ENCODE measurements at regions of chr15 and their contacts with region 1.

Region 1: GRCh38 chr15:43510200-43511011 is 7.0 kb upstream of the MAP1A start:
- DNase-seq: peak; percentile 96 to 98 (median 97)
- H3K4me3 ChIP-seq: peak overlapping the region; percentile 86 to 87
- H3K4me3 Mint-ChIP-seq: peak overlapping the region; percentile 92 to 98 (median 95)
- H3K27ac ChIP-seq: peak overlapping the region; percentile 71
- H3K27ac Mint-ChIP-seq: peak overlapping the region; percentile 96 to 99 (median 97)
- H3K4me1 ChIP-seq: peaks cover 40% of the 10 kb centered on the region
- H3K4me1 Mint-ChIP-seq: peaks cover 23 to 48% (median 38%) of the 10 kb centered on the region in 4 donors
- H3K27me3 ChIP-seq: no peaks in the 10 kb centered on the region
- H3K27me3 Mint-ChIP-seq: no peaks in the 10 kb centered on the region

Region 2: GRCh38 chr15:42891569-42891968 is 618.8 kb before region 1 on chr15:
- CTCF ChIA-PET with region 1: no interaction called
- POLR2A ChIA-PET with region 1: no interaction called
- intact Hi-C with region 1: no loop called
- DNase-seq: no peak
- H3K4me3 ChIP-seq: no peak overlapping the region
- H3K4me3 Mint-ChIP-seq: no peak overlapping the region
- H3K27ac ChIP-seq: no peak overlapping the region
- H3K27ac Mint-ChIP-seq: peak overlapping the region in 1 of 7 donors; percentile 29
- H3K4me1 ChIP-seq: no peaks in the 10 kb centered on the region
- H3K4me1 Mint-ChIP-seq: peaks cover 0 to 8% (median 3%) of the 10 kb centered on the region in 4 donors
- H3K27me3 ChIP-seq: no peaks in the 10 kb centered on the region
- H3K27me3 Mint-ChIP-seq: no peaks in the 10 kb centered on the region

Region 3: GRCh38 chr15:43370975-43371974 is 139.1 kb before region 1 on chr15 and contains the starts of genes TUBGCP4 and ZSCAN29:
- CTCF ChIA-PET with region 1: interaction called, 29 read pairs
- POLR2A ChIA-PET with region 1: interaction called, 14 read pairs
- intact Hi-C with region 1: loop called (anchors 5 kb)
- DNase-seq: peak; percentile 67 to 76 (median 68)
- H3K4me3 ChIP-seq: peak within 1 kb of the TSS; percentile 49 to 53
- H3K4me3 Mint-ChIP-seq: peak within 1 kb of the TSS; percentile 88 to 94 (median 92)
- H3K27ac ChIP-seq: peak within 1 kb of the TSS; percentile 70
- H3K27ac Mint-ChIP-seq: peak within 1 kb of the TSS; percentile 79 to 94 (median 90)
- H3K4me1 ChIP-seq: peaks cover 33% of the 10 kb centered on the region
- H3K4me1 Mint-ChIP-seq: peaks cover 45 to 65% (median 50%) of the 10 kb centered on the region in 4 donors
- H3K27me3 ChIP-seq: no peaks in the 10 kb centered on the region
- H3K27me3 Mint-ChIP-seq: no peaks in the 10 kb centered on the region
- total RNA-seq, gene TUBGCP4: 23.6 to 23.9 TPM
- total RNA-seq, gene ZSCAN29: 34.8 to 36.4 TPM

Region 4: GRCh38 chr15:43469867-43470266 is 40.5 kb before region 1 on chr15:
- CTCF ChIA-PET with region 1: interaction called, 24 read pairs
- POLR2A ChIA-PET with region 1: no interaction called
- intact Hi-C with region 1: no loop called
- DNase-seq: no peak
- H3K4me3 ChIP-seq: no peak overlapping the region
- H3K4me3 Mint-ChIP-seq: no peak overlapping the region
- H3K27ac ChIP-seq: no peak overlapping the region
- H3K27ac Mint-ChIP-seq: peak overlapping the region in 2 of 7 donors; percentile 12 to 27
- H3K4me1 ChIP-seq: no peaks in the 10 kb centered on the region
- H3K4me1 Mint-ChIP-seq: no peaks in the 10 kb centered on the region
- H3K27me3 ChIP-seq: no peaks in the 10 kb centered on the region
- H3K27me3 Mint-ChIP-seq: no peaks in the 10 kb centered on the region

Region 5: GRCh38 chr15:43492673-43493601 is 17.5 kb before region 1 on chr15 and contains the start of gene TP53BP1:
- CTCF ChIA-PET with region 1: interaction called, 252 read pairs
- POLR2A ChIA-PET with region 1: interaction called, 97 read pairs
- intact Hi-C with region 1: loop called (anchors 1 kb)
- DNase-seq: peak; percentile 92 to 98 (median 94)
- H3K4me3 ChIP-seq: peak within 1 kb of the TSS; percentile 74 to 90
- H3K4me3 Mint-ChIP-seq: peak within 1 kb of the TSS; percentile 94 to 99 (median 97)
- H3K27ac ChIP-seq: peak within 1 kb of the TSS; percentile 93
- H3K27ac Mint-ChIP-seq: peak within 1 kb of the TSS; percentile 92 to 100 (median 98)
- H3K4me1 ChIP-seq: peaks cover 27% of the 10 kb centered on the region
- H3K4me1 Mint-ChIP-seq: peaks cover 29 to 38% (median 32%) of the 10 kb centered on the region in 4 donors
- H3K27me3 ChIP-seq: no peaks in the 10 kb centered on the region
- H3K27me3 Mint-ChIP-seq: no peaks in the 10 kb centered on the region
- total RNA-seq, gene TP53BP1: 40.6 to 46.3 TPM

Region 6: GRCh38 chr15:43524254-43524845 is 13.9 kb after region 1 on chr15:
- CTCF ChIA-PET with region 1: interaction called, 21 read pairs
- POLR2A ChIA-PET with region 1: interaction called, 4 read pairs
- intact Hi-C with region 1: no loop called
- DNase-seq: no peak
- H3K4me3 ChIP-seq: no peak overlapping the region
- H3K4me3 Mint-ChIP-seq: no peak overlapping the region
- H3K27ac ChIP-seq: no peak overlapping the region
- H3K27ac Mint-ChIP-seq: peak overlapping the region in 4 of 7 donors; percentile 26 to 87 (median 48)
- H3K4me1 ChIP-seq: peaks cover 6% of the 10 kb centered on the region
- H3K4me1 Mint-ChIP-seq: peaks cover 7 to 17% (median 13%) of the 10 kb centered on the region in 4 donors
- H3K27me3 ChIP-seq: no peaks in the 10 kb centered on the region
- H3K27me3 Mint-ChIP-seq: peaks cover 0 to 4% of the 10 kb centered on the region in 2 donors

Region 7: GRCh38 chr15:43824302-43825246 is 314.2 kb after region 1 on chr15 and contains the start of gene MFAP1:
- CTCF ChIA-PET with region 1: no interaction called
- POLR2A ChIA-PET with region 1: no interaction called
- intact Hi-C with region 1: loop called (anchors 10 kb)
- DNase-seq: peak; percentile 88 to 95 (median 93)
- H3K4me3 ChIP-seq: peak within 1 kb of the TSS; percentile 92 to 100
- H3K4me3 Mint-ChIP-seq: peak within 1 kb of the TSS; percentile 96 to 99 (median 98)
- H3K27ac ChIP-seq: peak within 1 kb of the TSS; percentile 99
- H3K27ac Mint-ChIP-seq: peak within 1 kb of the TSS; percentile 92 to 99 (median 99)
- H3K4me1 ChIP-seq: peaks cover 67% of the 10 kb centered on the region
- H3K4me1 Mint-ChIP-seq: peaks cover 29 to 71% (median 52%) of the 10 kb centered on the region in 4 donors
- H3K27me3 ChIP-seq: no peaks in the 10 kb centered on the region
- H3K27me3 Mint-ChIP-seq: no peaks in the 10 kb centered on the region
- total RNA-seq, gene MFAP1: 24.9 to 25.9 TPM